Natural killer cell (primary cell): ENCODE measurements at regions of chr2 and their contacts with region 1.

Region 1: DNA sequence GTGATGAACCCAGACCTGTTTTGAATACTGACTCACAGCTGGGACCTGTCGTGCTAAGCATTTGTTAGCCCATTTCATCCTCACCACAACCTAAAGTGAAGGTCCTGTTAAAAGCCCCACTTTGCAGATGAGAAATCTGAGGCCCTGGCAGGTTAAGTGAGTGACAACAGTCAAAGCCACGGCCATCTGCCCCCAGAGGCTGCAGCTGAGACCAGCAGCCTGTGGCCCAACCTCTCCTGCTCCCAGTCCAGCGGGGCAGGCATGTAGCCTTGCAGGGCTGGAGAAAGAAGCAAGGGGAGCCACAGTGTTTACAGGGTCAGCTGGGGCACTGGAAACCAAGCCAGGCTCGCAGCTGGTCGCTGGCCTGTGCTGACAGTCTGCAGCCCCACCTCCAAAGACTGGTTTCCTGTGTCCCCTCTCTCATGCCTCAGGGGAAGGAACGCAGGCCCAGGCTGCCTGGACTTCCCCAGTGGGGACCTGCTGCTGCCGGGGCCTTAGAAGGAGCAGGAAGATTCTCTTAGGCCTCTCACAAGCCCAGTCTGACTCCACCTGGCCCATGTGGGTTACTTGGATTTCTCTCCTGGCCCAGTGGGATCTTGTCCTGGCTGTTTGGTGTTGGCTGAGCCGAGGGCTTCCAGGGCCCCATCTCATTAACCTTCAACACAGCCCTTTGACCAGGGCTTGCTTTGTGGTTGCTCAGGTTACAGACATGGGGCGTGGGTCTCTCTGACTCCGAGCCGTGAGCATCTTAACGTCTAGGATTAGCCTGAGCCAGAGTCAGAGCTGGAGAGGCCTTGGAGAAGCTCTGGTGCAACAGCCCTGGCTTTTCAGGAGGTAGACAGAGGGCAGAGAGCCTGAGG is 1.7 kb downstream of the INPP5D start:
- DNase-seq: peak in 1 of 2 donors; percentile 53
- ATAC-seq: peak; percentile 44 to 53 (median 45)
- H3K4me3 ChIP-seq: peak overlapping the region; percentile 91
- H3K4me3 Mint-ChIP-seq: peak overlapping the region; percentile 89
- H3K27ac ChIP-seq: peak overlapping the region; percentile 93
- H3K27ac Mint-ChIP-seq: peak overlapping the region; percentile 90 to 92
- H3K4me1 ChIP-seq: peaks cover 68% of the 10 kb centered on the region
- H3K4me1 Mint-ChIP-seq: peaks cover 61 to 73% of the 10 kb centered on the region in 2 donors
- H3K27me3 ChIP-seq: no peaks in the 10 kb centered on the region
- H3K27me3 Mint-ChIP-seq: no peaks in the 10 kb centered on the region
- CTCF ChIP-seq: peak; percentile 33

Region 2: GRCh38 chr2:233075966-233076339 is 14.1 kb after region 1 on chr2:
- intact Hi-C with region 1: loop called (anchors 2 kb)
- DNase-seq: peak; percentile 27 to 77
- ATAC-seq: peak; percentile 44 to 67 (median 55)
- H3K4me3 ChIP-seq: peak overlapping the region; percentile 15
- H3K4me3 Mint-ChIP-seq: no peak overlapping the region
- H3K27ac ChIP-seq: peak overlapping the region; percentile 80
- H3K27ac Mint-ChIP-seq: no peak overlapping the region
- H3K4me1 ChIP-seq: peaks cover 80% of the 10 kb centered on the region
- H3K4me1 Mint-ChIP-seq: peaks cover 36 to 39% of the 10 kb centered on the region in 2 donors
- H3K27me3 ChIP-seq: no peaks in the 10 kb centered on the region
- H3K27me3 Mint-ChIP-seq: no peaks in the 10 kb centered on the region
- CTCF ChIP-seq: no peak

Region 3: DNA sequence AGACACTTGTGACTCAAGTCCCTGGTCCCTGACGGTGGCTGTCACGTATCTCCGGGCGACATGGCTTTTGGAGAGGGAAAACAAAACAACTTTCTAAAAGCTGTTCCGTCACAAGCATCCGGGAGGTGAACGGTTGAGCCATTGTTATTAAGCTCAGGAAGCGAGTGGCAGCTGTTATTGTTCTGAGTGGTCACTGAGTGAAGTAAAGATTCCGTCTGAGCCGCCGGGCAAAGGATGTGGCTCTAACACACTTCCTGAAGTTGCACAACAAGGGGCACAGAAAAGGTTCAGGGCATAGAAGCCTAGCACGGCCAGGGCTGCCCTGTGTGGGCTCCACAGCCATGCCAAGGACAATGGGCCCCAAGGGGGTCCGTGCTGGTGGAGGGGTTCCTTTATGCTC is 22.7 kb after region 1 on chr2:
- intact Hi-C with region 1: loop called (anchors 2 kb)
- DNase-seq: peak; percentile 64 to 74
- ATAC-seq: peak; percentile 61 to 81 (median 76)
- H3K4me3 ChIP-seq: peak overlapping the region; percentile 3
- H3K4me3 Mint-ChIP-seq: peak overlapping the region; percentile 89
- H3K27ac ChIP-seq: peak overlapping the region; percentile 85
- H3K27ac Mint-ChIP-seq: no peak overlapping the region
- H3K4me1 ChIP-seq: peaks cover 98% of the 10 kb centered on the region
- H3K4me1 Mint-ChIP-seq: peaks cover 94 to 96% of the 10 kb centered on the region in 2 donors
- H3K27me3 ChIP-seq: no peaks in the 10 kb centered on the region
- H3K27me3 Mint-ChIP-seq: no peaks in the 10 kb centered on the region
- CTCF ChIP-seq: no peak

Region 4: DNA sequence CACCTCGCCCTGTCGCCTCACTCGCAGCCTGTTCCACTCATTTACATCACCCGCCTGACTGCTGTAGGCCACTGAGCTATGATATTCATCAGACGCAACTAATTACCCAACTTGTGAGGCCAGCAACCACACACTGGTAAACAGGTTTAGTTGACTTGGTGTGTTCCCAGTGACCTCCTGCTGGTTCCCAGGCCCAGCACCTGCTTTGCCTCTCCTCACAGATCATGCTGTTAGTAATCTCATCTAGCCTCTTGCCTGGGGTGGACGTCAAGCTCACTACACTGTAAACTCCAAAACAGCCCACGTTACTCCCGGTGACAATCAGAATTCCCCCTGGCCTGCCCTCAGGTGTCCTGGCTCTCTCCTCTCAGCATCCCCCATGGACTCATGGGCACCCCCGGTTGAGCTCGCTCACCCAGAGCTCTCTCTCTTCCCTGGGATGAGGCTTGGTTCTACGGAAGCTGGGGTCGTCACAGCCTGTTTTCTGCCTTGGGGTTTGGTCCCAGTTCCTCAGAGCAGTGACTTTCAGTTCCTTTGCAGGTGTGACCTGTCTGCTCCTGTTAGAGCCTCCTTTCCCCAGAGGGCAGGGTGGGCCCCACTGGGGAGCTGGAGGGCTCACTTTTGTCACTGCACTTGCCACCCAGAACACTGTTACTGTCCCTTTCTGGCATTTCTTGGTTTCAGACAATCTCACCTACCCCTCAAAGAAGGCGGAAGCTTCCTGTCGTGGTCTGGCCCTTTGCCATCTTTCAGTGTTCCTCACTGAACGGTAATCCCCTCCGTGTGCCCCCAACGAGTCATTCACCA is 38.6 kb after region 1 on chr2:
- intact Hi-C with region 1: loop called (anchors 5 kb)
- DNase-seq: peak; percentile 70 to 91
- ATAC-seq: peak; percentile 70 to 84 (median 78)
- H3K4me3 ChIP-seq: peak overlapping the region; percentile 4
- H3K4me3 Mint-ChIP-seq: peak overlapping the region; percentile 83
- H3K27ac ChIP-seq: peak overlapping the region; percentile 88
- H3K27ac Mint-ChIP-seq: peak overlapping the region; percentile 98 to 99
- H3K4me1 ChIP-seq: peaks cover 73% of the 10 kb centered on the region
- H3K4me1 Mint-ChIP-seq: peaks cover 80 to 84% of the 10 kb centered on the region in 2 donors
- H3K27me3 ChIP-seq: no peaks in the 10 kb centered on the region
- H3K27me3 Mint-ChIP-seq: no peaks in the 10 kb centered on the region
- CTCF ChIP-seq: no peak

Region 5: DNA sequence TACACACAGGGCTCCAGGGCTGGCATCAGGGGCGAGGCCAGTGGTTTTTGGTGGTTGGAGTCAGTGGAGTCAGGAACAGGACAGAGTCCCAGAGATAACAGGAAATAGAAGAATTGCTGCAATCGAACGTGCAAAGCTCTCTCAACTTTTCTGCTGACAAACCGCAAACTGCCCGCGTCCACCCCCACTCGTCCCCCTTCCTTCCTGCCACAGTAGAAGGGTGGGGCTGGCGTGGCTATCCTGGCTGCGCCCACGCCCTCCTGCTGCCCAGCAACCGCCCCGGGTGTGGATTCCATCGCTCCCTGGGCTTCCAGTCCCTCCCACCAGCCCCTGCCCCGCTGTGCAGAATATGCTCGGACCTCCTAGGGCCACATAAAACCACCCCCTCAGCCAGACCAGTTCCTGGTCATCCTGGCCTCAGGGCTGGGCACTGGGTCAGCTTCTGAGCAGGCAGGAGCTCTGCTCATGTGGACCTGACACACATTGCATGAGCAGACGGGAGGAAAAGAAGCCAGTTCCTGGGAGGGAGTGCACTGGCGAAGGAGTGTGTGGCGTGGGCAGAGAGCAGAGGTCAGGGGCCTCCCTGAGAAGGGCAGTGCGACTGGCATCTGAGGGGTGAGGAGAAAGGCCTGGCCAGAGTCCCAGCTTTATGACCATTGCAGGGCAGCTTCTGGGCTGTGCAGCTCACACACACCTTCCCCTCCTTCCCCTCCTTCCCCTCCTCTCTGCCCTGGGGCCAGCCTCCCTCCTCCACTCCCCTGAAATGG is 104.3 kb after region 1 on chr2:
- intact Hi-C with region 1: loop called (anchors 5 kb)
- DNase-seq: peak; percentile 44 to 53
- ATAC-seq: peak; percentile 63 to 74 (median 72)
- H3K4me3 ChIP-seq: no peak overlapping the region
- H3K4me3 Mint-ChIP-seq: no peak overlapping the region
- H3K27ac ChIP-seq: peak overlapping the region; percentile 64
- H3K27ac Mint-ChIP-seq: no peak overlapping the region
- H3K4me1 ChIP-seq: peaks cover 58% of the 10 kb centered on the region
- H3K4me1 Mint-ChIP-seq: peaks cover 18 to 23% of the 10 kb centered on the region in 2 donors
- H3K27me3 ChIP-seq: no peaks in the 10 kb centered on the region
- H3K27me3 Mint-ChIP-seq: no peaks in the 10 kb centered on the region
- CTCF ChIP-seq: no peak

Region 6: DNA sequence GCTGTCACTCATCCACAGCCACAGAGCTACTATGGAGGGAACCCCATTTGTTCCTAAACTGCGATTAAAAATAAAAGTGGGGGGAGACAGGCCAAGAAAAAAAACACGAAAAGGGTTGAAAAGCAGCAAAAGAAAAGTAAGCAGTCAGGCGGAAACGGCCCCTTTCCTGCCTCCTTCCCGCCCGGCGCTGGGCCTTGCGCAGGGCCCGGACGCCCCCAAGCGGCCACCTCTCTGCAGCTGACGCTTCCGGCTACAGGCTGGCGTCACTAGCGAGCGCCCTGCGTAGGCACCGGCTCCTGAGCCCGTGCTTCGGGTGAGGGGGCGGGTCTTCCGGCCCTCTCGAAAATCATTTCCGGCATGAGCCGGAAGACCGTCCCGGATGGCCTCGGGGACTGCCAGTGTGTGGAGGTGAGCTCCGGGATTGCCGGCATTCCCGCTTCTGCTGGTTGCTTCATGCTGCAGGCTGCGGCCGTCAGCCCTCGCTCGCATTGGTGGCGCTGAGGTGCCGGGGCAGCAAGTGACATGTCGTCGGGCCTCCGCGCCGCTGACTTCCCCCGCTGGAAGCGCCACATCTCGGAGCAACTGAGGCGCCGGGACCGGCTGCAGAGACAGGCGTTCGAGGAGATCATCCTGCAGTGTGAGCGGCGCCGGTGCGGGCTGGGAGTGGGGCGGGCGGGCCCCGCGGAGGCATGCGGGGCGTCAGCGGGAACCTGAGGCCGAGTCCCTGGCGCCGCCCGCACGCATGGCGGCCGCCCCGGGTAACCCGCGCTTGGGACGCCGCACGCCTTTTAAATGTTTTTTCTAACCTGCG is 189.7 kb after region 1 on chr2 and contains the start of gene ATG16L1:
- intact Hi-C with region 1: loop called (anchors 5 kb)
- DNase-seq: peak; percentile 94 to 98
- ATAC-seq: peak; percentile 97 to 100 (median 98)
- H3K4me3 ChIP-seq: peak within 1 kb of the TSS; percentile 74
- H3K4me3 Mint-ChIP-seq: peak within 1 kb of the TSS; percentile 96
- H3K27ac ChIP-seq: peak within 1 kb of the TSS; percentile 73
- H3K27ac Mint-ChIP-seq: peak within 1 kb of the TSS; percentile 93 to 94
- H3K4me1 ChIP-seq: peaks cover 32% of the 10 kb centered on the region
- H3K4me1 Mint-ChIP-seq: peaks cover 45 to 56% of the 10 kb centered on the region in 2 donors
- H3K27me3 ChIP-seq: no peaks in the 10 kb centered on the region
- H3K27me3 Mint-ChIP-seq: no peaks in the 10 kb centered on the region
- CTCF ChIP-seq: peak; percentile 91
- total RNA-seq, gene ATG16L1: 106 to 142 (median 117) TPM

Region 7: DNA sequence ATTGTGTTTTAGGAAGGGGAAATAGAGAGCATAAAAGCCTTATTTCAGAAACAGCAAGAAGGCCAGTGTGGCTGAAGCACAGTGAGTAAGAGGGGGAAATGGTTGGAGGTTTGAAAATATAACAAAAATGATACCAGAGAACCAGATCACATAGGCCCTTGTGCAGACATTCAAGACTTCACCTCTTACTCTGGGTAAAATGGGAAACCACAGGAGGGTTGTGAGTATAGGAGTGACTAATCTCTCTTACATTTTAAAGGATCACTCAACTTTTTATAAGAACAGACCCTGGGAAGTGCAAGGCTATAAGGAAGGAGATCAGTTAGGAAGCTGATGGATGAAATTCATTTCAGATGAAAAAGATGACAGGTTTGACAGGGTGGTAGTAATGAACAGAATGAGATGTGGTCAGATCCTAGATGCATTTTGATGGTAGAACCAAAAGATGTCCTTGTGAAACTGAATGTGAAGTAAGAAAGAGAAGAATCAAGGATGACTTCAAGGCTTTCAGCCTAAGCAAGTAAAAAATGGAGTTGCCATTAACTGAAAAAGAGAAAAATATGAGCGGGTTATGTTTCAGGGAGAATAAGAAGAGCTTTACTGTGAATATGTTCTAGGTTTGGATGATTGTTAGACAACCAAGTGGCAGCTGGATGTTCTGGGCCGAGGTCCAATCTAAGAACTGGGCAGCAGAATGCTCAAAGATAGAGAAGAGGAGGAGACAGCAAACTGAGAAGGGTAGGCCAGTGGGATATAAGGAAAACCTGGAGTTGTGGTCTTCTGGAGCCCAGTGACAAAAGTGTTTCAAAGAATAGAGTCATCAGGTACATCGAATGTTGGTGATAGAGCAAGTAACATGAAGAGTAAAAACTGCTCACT is 439.6 kb after region 1 on chr2:
- intact Hi-C with region 1: no loop called
- DNase-seq: no peak
- ATAC-seq: no peak
- H3K4me3 ChIP-seq: no peak overlapping the region
- H3K4me3 Mint-ChIP-seq: no peak overlapping the region
- H3K27ac ChIP-seq: no peak overlapping the region
- H3K27ac Mint-ChIP-seq: no peak overlapping the region
- H3K4me1 ChIP-seq: no peaks in the 10 kb centered on the region
- H3K4me1 Mint-ChIP-seq: peaks cover 5% of the 10 kb centered on the region in 2 donors
- H3K27me3 ChIP-seq: no peaks in the 10 kb centered on the region
- H3K27me3 Mint-ChIP-seq: no peaks in the 10 kb centered on the region
- CTCF ChIP-seq: no peak